ENCODE measurements at regions of chr13 and their contacts with region 1.

Region 1: GRCh38 chr13:91406619-91407018 is 8.2 kb downstream of the GPC5 start:
- DNase-seq: peak; percentile 79
- ATAC-seq: peak; percentile 94
- H3K4me3 ChIP-seq: no peak overlapping the region
- H3K27ac ChIP-seq: no peak overlapping the region
- H3K4me1 ChIP-seq: no peaks in the 10 kb centered on the region
- H3K27me3 ChIP-seq: peaks cover 0 to 8% of the 10 kb centered on the region in 2 experiments; a peak in 2 of 5 replicates
- CTCF ChIP-seq: peak; percentile 83
- EP300 ChIP-seq: no peak
- POLR2A ChIP-seq: no peak
- RAD21 ChIP-seq: peak; percentile 38; the same call in 1 of the 2 replicates

Region 2: GRCh38 chr13:91133941-91134802 is 272.4 kb before region 1 on chr13:
- CTCF ChIA-PET with region 1: interaction called, 9 read pairs
- POLR2A ChIA-PET with region 1: no interaction called
- in situ Hi-C with region 1: no loop called
- intact Hi-C with region 1: loop called (anchors 1 kb)
- DNase-seq: peak; percentile 63
- ATAC-seq: peak; percentile 93
- H3K4me3 ChIP-seq: no peak overlapping the region
- H3K27ac ChIP-seq: no peak overlapping the region
- H3K4me1 ChIP-seq: no peaks in the 10 kb centered on the region
- H3K27me3 ChIP-seq: no peaks in the 10 kb centered on the region
- CTCF ChIP-seq: peak; percentile 70
- EP300 ChIP-seq: no peak
- POLR2A ChIP-seq: no peak
- RAD21 ChIP-seq: no peak

Region 3: DNA sequence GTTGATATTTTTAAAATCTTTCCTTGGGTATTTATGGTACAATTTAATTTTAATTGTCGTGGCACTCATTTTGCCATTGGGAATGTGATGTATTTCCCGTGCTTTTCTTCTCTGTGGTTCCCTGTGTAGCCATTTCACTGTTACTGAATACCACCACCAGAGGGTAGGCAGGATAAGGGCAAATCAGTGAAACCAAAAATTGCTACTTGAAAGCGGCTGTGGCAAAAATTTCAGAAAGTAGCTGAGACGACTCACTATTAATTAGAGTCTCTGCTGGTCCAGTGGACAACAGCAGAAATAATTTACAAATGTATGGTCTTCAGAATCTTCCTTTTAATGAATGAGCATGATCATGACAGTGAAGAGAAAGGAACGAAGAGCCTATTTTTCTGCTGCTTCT is 93.5 kb before region 1 on chr13:
- CTCF ChIA-PET with region 1: interaction called, 5 read pairs
- POLR2A ChIA-PET with region 1: no interaction called
- in situ Hi-C with region 1: no loop called
- intact Hi-C with region 1: loop called (anchors 1 kb)
- DNase-seq: peak; percentile 22
- ATAC-seq: peak; percentile 84
- H3K4me3 ChIP-seq: no peak overlapping the region
- H3K27ac ChIP-seq: no peak overlapping the region
- H3K4me1 ChIP-seq: no peaks in the 10 kb centered on the region
- H3K27me3 ChIP-seq: peaks cover 0 to 4% of the 10 kb centered on the region in 2 experiments; a peak in 1 of 5 replicates
- CTCF ChIP-seq: peak; percentile 45
- EP300 ChIP-seq: no peak
- POLR2A ChIP-seq: no peak
- RAD21 ChIP-seq: peak; percentile 30; the same call in 1 of the 2 replicates

Region 4: GRCh38 chr13:91323349-91323748 is 83.3 kb before region 1 on chr13:
- CTCF ChIA-PET with region 1: no interaction called
- POLR2A ChIA-PET with region 1: no interaction called
- in situ Hi-C with region 1: no loop called
- intact Hi-C with region 1: no loop called
- DNase-seq: no peak
- ATAC-seq: no peak
- H3K4me3 ChIP-seq: no peak overlapping the region
- H3K27ac ChIP-seq: no peak overlapping the region
- H3K4me1 ChIP-seq: no peaks in the 10 kb centered on the region
- H3K27me3 ChIP-seq: peaks cover 0 to 12% of the 10 kb centered on the region in 2 experiments; a peak in 1 of 5 replicates
- CTCF ChIP-seq: no peak
- EP300 ChIP-seq: no peak
- POLR2A ChIP-seq: no peak
- RAD21 ChIP-seq: no peak

Region 5: DNA sequence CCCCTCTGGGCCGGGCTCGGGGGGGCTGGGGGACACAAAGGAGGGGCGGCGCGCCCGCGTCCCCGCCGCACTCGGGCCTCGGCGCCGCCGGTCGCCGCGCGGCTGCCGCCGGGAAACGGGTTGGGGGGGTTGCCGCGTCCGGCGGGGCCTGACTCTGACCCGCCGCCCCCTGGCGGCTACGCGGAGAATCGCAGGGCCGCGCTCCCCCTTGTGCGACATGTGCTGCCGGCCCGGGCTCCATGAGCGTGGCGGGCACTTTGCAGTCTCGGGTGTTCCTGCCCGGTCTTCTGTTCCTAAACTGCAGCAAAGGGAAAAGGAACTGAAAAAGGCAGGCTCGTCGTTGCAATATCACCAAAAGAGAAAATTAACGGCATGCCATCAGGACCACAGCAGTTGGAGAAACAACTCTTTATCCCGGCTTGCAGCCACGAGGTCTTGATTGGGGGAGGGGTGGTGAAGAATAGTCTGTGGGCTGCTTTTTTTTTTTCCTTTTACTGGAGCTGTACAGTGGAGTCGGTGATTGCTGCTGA is 57.6 kb before region 1 on chr13:
- CTCF ChIA-PET with region 1: no interaction called
- POLR2A ChIA-PET with region 1: no interaction called
- in situ Hi-C with region 1: no loop called
- intact Hi-C with region 1: loop called (anchors 2 kb)
- DNase-seq: peak; percentile 75
- ATAC-seq: peak; percentile 54; the same call in 2 of the 3 replicates
- H3K4me3 ChIP-seq: peak overlapping the region; percentile 78 to 88 (median 82)
- H3K27ac ChIP-seq: peak overlapping the region; percentile 89
- H3K4me1 ChIP-seq: peaks cover 51% of the 10 kb centered on the region
- H3K27me3 ChIP-seq: peaks cover 0 to 16% of the 10 kb centered on the region in 2 experiments; a peak in 4 of 5 replicates
- CTCF ChIP-seq: peak; percentile 84
- EP300 ChIP-seq: no peak
- POLR2A ChIP-seq: peak in 1 of 2 experiments; percentile 49; a peak in 1 of 4 replicates
- RAD21 ChIP-seq: peak; percentile 66; the same call in 1 of the 2 replicates

Region 6: DNA sequence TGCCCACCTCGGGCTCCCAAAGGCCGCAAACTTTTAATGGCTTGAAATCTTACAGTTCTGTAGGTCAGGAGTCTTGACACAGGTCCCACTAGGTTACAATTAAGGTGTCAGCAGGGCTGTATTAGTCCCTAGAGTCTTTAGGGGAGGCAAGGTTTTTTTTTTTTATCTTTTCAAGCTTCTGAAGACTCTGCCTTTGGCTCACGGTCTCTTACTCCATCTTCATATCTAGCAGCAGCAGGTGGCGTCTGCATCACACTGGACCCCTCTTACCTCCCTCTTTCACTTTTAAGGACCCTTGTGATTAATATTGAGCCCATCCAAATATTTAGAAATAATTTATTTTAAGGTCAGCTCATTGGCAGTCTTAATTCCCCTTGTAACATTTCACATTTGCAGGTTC is 47.5 kb before region 1 on chr13:
- CTCF ChIA-PET with region 1: no interaction called
- POLR2A ChIA-PET with region 1: no interaction called
- in situ Hi-C with region 1: no loop called
- intact Hi-C with region 1: no loop called
- DNase-seq: no peak
- ATAC-seq: no peak; the same call in 1 of the 3 replicates
- H3K4me3 ChIP-seq: no peak overlapping the region
- H3K27ac ChIP-seq: no peak overlapping the region
- H3K4me1 ChIP-seq: peaks cover 98% of the 10 kb centered on the region
- H3K27me3 ChIP-seq: no peaks in the 10 kb centered on the region
- CTCF ChIP-seq: no peak
- EP300 ChIP-seq: no peak
- POLR2A ChIP-seq: no peak
- RAD21 ChIP-seq: no peak

Region 7: DNA sequence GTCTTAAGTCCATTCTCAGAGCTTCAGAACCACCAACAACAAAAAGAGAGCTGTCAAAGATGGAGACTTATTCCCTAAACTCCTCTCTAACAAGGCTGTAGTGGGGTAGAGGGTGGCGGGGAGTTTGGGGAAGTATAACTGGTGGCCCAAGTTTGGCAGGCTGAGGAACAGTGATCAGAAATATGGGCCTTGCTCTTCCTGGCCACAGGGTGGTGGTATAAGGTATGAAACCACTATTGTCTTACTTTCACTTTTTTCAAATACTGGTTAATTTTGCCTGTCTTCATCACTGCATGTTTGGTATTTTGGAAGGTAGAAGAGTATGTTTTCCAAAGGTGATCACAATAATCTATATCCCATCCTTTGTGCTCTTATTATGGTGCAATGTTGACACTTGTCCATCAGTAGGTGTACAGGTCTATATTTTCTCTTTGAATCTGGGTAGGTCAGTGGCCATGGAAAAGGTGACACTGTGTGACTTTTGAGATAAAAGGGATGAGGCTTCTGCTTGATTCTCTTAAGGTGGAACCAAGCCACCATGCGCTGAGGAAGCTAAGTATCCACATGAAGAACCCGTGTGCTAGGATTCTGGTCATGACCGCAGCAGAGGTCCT is 31.4 kb before region 1 on chr13:
- CTCF ChIA-PET with region 1: interaction called, 6 read pairs
- POLR2A ChIA-PET with region 1: no interaction called
- in situ Hi-C with region 1: no loop called
- intact Hi-C with region 1: loop called (anchors 1 kb)
- DNase-seq: no peak
- ATAC-seq: peak; percentile 76
- H3K4me3 ChIP-seq: no peak overlapping the region
- H3K27ac ChIP-seq: no peak overlapping the region
- H3K4me1 ChIP-seq: peaks cover 30% of the 10 kb centered on the region
- H3K27me3 ChIP-seq: no peaks in the 10 kb centered on the region
- CTCF ChIP-seq: peak; percentile 62
- EP300 ChIP-seq: no peak
- POLR2A ChIP-seq: no peak
- RAD21 ChIP-seq: 0 out of 2 replicates have a peak, but pooled peaks have one; percentile 18

Region 8: DNA sequence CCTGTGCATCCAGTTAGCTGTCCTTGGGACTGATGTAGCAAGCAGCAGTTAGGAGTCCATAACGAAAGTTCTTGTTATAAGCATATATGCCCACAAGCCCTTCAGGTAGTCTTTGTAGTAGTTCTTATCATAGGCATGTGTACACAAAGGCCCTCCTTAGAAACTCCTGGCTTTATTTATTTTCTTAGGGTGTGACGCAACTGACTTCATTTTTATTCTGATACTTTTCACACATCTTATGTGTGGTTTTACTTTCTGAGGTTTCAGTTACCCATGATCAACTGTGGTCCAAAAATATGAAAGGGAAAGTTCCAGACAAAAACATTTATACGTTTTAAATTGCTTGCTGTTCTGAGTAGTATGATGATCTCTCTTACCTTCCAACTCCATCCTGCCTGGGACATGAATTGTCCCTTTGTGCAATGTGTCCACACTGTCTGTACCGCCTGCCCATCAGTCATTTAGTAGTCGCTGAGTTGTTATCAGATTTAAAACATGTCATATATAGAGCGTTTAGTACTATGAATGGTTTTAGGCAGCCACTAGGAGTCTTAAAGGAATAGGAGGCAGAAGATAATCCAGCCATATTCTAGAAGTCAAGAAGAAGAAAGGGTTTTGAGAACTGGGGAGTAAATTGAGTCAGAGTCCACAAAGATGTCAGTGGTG is 11.2 kb after region 1 on chr13:
- CTCF ChIA-PET with region 1: no interaction called
- POLR2A ChIA-PET with region 1: no interaction called
- in situ Hi-C with region 1: no loop called
- intact Hi-C with region 1: no loop called
- DNase-seq: no peak
- ATAC-seq: no peak
- H3K4me3 ChIP-seq: no peak overlapping the region
- H3K27ac ChIP-seq: no peak overlapping the region
- H3K4me1 ChIP-seq: no peaks in the 10 kb centered on the region
- H3K27me3 ChIP-seq: no peaks in the 10 kb centered on the region; a peak in 1 of 5 replicates
- CTCF ChIP-seq: no peak
- EP300 ChIP-seq: no peak
- POLR2A ChIP-seq: no peak
- RAD21 ChIP-seq: no peak

Region 9: DNA sequence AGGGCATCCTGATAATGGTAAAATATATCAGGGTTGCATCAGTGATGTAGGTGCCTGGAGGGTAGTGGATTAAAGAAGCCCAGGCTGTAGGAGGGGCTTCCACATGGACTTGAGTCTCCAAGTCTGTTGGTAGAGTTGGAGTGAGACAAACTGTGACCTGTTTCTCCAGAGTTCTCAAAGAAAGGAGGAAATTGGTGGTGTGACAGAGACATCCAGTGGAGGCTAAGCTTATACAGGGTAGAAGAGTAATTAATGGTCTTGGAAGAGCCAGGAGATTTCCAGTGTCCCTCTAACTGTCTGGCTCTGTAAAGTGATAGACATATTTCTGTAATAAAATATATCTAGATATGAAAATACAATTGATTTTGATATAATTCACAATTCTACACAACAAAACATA is 52.9 kb after region 1 on chr13:
- CTCF ChIA-PET with region 1: no interaction called
- POLR2A ChIA-PET with region 1: no interaction called
- in situ Hi-C with region 1: no loop called
- intact Hi-C with region 1: no loop called
- DNase-seq: peak; percentile 0
- ATAC-seq: no peak; the same call in 2 of the 3 replicates
- H3K4me3 ChIP-seq: no peak overlapping the region
- H3K27ac ChIP-seq: no peak overlapping the region
- H3K4me1 ChIP-seq: no peaks in the 10 kb centered on the region
- H3K27me3 ChIP-seq: no peaks in the 10 kb centered on the region
- CTCF ChIP-seq: peak; percentile 21; the same call in 1 of the 2 replicates
- EP300 ChIP-seq: no peak
- POLR2A ChIP-seq: no peak
- RAD21 ChIP-seq: no peak

Measured in HepG2 (cell line).